Gastrocnemius medialis (tissue), 4 donors: ENCODE measurements at regions of chr3 and their contacts with region 1.

Region 1: DNA sequence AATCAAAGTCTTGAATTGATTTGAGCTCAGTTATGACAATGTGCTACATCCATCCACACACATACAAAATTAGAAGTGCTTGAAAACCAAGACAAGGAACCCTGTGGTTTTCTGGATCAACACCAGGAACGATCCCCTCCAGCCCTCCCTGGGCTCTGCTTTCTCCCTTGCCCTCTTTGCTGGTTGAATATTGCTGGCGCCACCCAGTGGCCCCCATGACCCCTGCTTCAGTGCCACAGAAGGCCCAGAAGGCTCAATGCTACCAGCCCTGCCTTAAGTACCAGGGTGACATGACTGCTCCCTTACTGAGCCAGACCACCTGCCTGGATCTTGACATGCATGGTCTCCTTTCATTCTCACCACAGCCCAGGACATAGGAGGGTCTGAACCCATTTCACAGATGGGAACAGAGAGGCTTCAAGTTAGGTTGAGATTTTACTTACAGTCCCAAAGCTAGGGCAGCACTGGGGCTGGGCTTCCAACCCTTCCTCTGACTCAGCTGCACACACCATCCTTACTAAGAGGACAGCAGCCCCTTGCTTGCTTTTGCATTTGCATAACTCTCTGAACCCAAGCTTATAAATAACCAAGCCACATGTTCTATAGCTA is 15.0 kb downstream of the IL12A start:
- DNase-seq: peak; percentile 11 to 24
- ATAC-seq: no peak
- H3K4me3 ChIP-seq: no peak overlapping the region
- H3K27ac ChIP-seq: no peak overlapping the region
- H3K4me1 ChIP-seq: peaks cover 0 to 4% of the 10 kb centered on the region in 2 donors
- H3K27me3 ChIP-seq: no peaks in the 10 kb centered on the region
- CTCF ChIP-seq: peak; percentile 34 to 60 (median 38)
- POLR2A ChIP-seq: no peak

Region 2: DNA sequence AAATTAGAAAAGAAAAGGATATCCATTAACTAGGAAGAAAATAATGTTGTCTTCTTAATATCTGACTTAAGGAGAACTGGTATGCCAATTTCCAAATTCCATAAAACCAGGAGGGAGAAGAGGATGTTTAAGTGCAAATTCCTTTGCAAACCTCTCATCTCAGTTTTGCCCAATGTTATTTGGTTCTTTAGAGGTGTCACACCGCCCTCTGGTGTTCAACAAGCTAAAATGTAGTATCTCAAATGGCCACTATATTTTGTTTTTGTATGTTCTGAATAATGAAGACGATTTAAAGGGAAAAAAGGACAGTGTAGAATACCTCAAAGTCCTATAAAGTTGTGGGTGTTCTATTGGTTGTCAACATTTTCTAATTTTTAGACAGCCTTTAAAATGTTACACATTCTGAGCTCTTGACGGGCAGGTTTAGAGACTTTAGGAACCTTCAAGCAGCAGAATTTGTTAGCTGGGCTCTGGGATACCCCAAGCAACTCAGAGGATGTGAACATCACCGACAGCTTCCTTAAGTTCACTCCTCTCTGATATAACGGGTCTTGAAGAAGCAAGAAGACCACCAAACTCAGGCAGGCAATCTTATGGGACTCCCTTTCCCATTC is 743.5 kb before region 1 on chr3:
- in situ Hi-C with region 1: loop called in 1 of 4 experiments (anchors 25 kb)
- intact Hi-C with region 1: no loop called
- DNase-seq: no peak
- ATAC-seq: no peak
- H3K4me3 ChIP-seq: no peak overlapping the region
- H3K27ac ChIP-seq: no peak overlapping the region
- H3K4me1 ChIP-seq: no peaks in the 10 kb centered on the region
- H3K27me3 ChIP-seq: no peaks in the 10 kb centered on the region
- CTCF ChIP-seq: peak; percentile 37 to 71 (median 61)
- POLR2A ChIP-seq: no peak

Region 3: DNA sequence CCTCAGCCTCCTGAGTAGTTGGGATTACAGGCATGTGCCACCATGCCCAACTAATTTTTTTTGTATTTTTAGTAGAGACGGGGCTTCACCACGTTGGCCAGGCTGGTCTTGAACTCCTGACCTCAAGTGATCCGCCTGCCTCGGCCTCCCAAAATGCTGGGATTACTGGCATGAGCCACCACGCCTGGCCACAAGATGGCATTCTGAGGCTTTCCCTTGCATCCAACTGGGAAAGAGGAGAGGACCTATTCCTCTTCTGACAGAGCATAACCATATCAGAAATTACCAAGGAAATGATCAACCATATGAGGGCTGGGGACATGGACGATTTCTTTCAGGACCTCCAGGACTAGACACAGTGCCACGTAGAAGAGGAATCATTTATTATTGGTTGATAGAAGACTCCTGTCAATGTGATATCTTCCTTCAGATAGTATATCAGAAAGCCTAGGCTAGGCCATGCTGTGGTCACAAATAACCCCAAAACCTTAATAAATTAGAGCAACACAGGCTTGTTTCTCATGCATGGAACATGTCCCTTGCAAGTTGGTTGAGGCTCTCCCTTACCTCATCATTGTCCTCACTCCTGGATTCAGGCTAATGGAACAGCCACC is 387.3 kb before region 1 on chr3:
- in situ Hi-C with region 1: loop called in 1 of 4 experiments (anchors 25 kb)
- intact Hi-C with region 1: loop called (anchors 5 kb)
- DNase-seq: no peak
- ATAC-seq: no peak
- H3K4me3 ChIP-seq: no peak overlapping the region
- H3K27ac ChIP-seq: no peak overlapping the region
- H3K4me1 ChIP-seq: no peaks in the 10 kb centered on the region
- H3K27me3 ChIP-seq: no peaks in the 10 kb centered on the region
- CTCF ChIP-seq: peak in 3 of 5 experiments; percentile 42 to 50 (median 48)
- POLR2A ChIP-seq: no peak

Region 4: DNA sequence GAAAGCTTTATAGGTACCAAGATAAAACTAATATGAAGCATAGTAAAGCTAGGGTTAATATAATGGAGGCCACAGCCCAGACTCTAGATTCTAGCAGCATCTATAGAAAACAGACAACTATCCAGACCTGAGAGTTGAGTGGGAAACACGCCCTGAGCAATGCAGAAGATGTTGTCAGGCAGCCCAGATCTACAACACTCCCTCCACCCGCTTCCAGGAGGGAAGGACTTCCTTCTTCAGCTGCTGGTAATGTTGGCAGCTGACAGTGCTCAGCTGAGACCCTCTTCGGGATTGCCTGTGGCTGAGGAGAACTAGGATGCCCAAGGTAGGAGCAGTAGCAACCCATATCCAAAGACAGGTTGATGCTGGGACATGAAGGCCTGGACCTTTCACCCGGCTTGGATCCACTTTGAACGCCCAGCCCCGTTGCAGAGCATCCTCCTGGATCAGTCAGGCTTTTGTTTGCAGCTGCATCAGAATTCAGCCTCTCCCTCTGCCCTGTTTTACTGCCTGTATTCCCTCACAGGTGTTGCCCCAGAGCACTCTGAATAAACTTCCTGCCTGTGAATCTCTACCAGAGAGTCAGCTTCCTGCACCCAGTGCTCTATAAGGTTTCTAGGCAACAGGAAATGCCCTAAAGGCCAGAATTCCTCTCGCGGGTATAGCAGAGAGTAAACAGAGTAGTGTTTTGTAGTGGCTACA is 189.7 kb before region 1 on chr3:
- in situ Hi-C with region 1: loop called in 1 of 4 experiments (anchors 5 kb)
- intact Hi-C with region 1: no loop called
- DNase-seq: no peak
- ATAC-seq: no peak
- H3K4me3 ChIP-seq: no peak overlapping the region
- H3K27ac ChIP-seq: no peak overlapping the region
- H3K4me1 ChIP-seq: peaks cover 4 to 8% of the 10 kb centered on the region in 2 donors
- H3K27me3 ChIP-seq: no peaks in the 10 kb centered on the region
- CTCF ChIP-seq: no peak
- POLR2A ChIP-seq: no peak

Region 5: DNA sequence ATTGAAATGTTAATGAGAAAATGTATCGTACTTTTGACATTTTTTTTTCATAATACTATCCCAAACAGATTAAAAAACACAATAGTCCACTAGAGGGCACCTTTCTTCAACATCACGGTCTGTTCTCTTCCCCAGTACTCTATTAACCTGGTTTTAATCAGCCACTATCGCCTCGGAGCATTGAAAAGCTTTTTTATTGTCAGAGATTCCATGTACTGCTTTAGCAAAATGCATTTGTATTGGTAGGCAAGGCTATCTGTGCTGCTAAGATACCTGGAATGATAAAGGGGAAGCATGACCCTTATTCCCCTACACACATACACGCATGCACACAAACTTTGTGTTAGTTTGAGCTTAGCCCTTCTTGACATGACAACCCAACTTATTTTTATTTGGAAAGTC is 175.1 kb before region 1 on chr3:
- in situ Hi-C with region 1: loop called in 3 of 4 experiments (anchors 5 to 10 kb)
- intact Hi-C with region 1: loop called (anchors 1 kb)
- DNase-seq: no peak
- ATAC-seq: peak; percentile 61 to 66
- H3K4me3 ChIP-seq: peak overlapping the region; percentile 17 to 51 (median 24)
- H3K27ac ChIP-seq: peak overlapping the region; percentile 80 to 84 (median 82)
- H3K4me1 ChIP-seq: peaks cover 34 to 48% of the 10 kb centered on the region in 2 donors
- H3K27me3 ChIP-seq: no peaks in the 10 kb centered on the region
- CTCF ChIP-seq: peak; percentile 58 to 65 (median 63)
- POLR2A ChIP-seq: no peak

Region 6: GRCh38 chr3:159884661-159885402 is 118.8 kb before region 1 on chr3:
- in situ Hi-C with region 1: loop called in 3 of 4 experiments (anchors 5 to 25 kb)
- intact Hi-C with region 1: loop called (anchors 1 kb)
- DNase-seq: no peak
- ATAC-seq: no peak
- H3K4me3 ChIP-seq: no peak overlapping the region
- H3K27ac ChIP-seq: peak overlapping the region in 3 of 4 donors; percentile 39 to 92 (median 83)
- H3K4me1 ChIP-seq: peaks cover 60 to 68% of the 10 kb centered on the region in 2 donors
- H3K27me3 ChIP-seq: no peaks in the 10 kb centered on the region
- CTCF ChIP-seq: peak; percentile 24 to 57 (median 41)
- POLR2A ChIP-seq: no peak